Heart left ventricle (tissue), 16 donors: ENCODE measurements at regions of chr1 and their contacts with region 1.

Region 1: DNA sequence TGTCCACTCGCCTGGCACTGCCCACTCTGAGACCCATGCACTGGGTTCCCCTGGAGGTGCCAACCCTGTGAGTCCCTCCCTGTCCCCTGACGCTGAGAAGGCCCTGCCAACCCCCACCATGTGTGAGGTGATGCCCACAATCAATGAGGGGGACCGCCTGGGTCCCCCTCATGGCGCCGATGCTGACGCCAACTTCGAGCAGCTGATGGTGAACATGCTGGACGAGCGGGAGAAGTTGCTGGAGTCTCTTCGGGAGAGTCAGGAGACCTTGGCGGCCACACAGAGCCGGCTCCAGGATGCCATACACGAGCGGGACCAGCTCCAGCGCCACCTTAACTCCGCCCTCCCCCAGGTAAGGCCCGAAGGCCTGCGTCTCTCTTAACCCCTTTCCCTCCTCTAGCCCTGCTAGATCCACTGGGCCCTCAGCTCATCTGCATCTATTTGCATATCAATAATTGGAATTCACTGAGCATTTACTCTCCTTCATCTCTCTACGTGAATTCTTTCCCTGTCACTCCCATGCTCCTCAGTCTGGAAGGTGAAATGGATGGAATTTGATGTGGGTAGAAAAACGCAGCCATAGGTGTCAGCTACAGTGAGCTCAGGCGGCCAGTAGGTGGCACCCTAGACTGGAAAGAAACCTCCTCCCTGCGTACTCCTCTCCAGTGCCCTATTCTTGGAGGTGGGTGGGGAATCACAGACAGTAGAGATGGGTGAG is 12.8 kb downstream of the PPFIA4 start:
- DNase-seq: peak; percentile 75 to 82 (median 80)
- ATAC-seq: peak; percentile 70 to 82 (median 79)
- H3K4me3 ChIP-seq: no peak overlapping the region
- H3K27ac ChIP-seq: peak overlapping the region in 10 of 12 donors; percentile 63 to 90 (median 80)
- H3K4me1 ChIP-seq: peaks cover 0 to 73% (median 34%) of the 10 kb centered on the region in 12 donors
- H3K27me3 ChIP-seq: peaks cover 0 to 5% (median 0%) of the 10 kb centered on the region in 9 donors
- CTCF ChIP-seq: peak; percentile 86 to 96 (median 92)
- POLR2A ChIP-seq: no peak

Region 2: GRCh38 chr1:202733251-202733650 is 305.8 kb before region 1 on chr1:
- intact Hi-C with region 1: no loop called
- DNase-seq: no peak
- ATAC-seq: no peak
- H3K4me3 ChIP-seq: no peak overlapping the region
- H3K27ac ChIP-seq: no peak overlapping the region
- H3K4me1 ChIP-seq: no peaks in the 10 kb centered on the region
- H3K27me3 ChIP-seq: no peaks in the 10 kb centered on the region
- CTCF ChIP-seq: no peak
- POLR2A ChIP-seq: no peak

Region 3: GRCh38 chr1:203057911-203058675 is 19.0 kb after region 1 on chr1:
- intact Hi-C with region 1: no loop called
- DNase-seq: no peak
- ATAC-seq: peak in 1 of 4 donors; percentile 33
- H3K4me3 ChIP-seq: no peak overlapping the region
- H3K27ac ChIP-seq: no peak overlapping the region
- H3K4me1 ChIP-seq: peaks cover 0 to 33% (median 9%) of the 10 kb centered on the region in 12 donors
- H3K27me3 ChIP-seq: no peaks in the 10 kb centered on the region
- CTCF ChIP-seq: no peak
- POLR2A ChIP-seq: no peak

Region 4: DNA sequence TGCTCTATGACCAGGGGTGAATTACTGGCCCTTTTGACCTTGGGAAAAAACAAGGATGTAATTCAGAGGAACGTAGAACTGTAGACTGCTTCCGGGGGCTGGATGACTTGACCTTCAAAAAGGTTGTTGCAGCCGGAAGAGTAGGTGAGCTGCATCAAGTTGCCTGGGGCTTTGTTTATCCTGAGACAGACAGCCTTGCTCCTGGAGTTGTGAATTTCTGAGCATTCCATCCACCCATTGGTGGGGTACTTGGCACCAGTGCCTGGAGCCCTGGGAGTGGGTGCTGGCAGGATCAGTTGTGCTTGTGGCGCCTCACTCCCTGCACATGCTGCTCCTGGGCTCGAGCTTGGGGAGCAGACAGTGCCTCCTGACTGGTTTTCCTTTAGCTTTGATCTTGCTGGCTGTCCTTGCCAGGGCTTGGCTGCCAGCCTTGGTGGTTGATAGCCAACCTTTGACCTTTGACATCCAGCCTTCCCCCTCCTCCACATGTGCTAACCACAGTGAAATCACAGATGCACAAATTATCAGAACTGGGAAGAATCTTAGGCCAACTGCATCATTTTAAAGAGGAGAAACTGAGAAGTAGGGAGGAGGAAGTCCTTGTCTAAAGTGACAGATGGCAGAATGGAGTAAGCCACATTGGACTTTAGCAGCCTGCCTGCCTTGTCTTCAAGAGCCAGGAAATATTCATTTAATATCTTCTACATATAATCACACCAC is 63.0 kb after region 1 on chr1:
- intact Hi-C with region 1: no loop called
- DNase-seq: no peak
- ATAC-seq: no peak
- H3K4me3 ChIP-seq: no peak overlapping the region
- H3K27ac ChIP-seq: no peak overlapping the region
- H3K4me1 ChIP-seq: peaks cover 0 to 6% (median 0%) of the 10 kb centered on the region in 12 donors
- H3K27me3 ChIP-seq: peaks cover 0 to 10% (median 0%) of the 10 kb centered on the region in 9 donors
- CTCF ChIP-seq: no peak
- POLR2A ChIP-seq: no peak

Region 5: GRCh38 chr1:203112301-203112874 is 73.3 kb after region 1 on chr1:
- intact Hi-C with region 1: loop called in 2 of 10 experiments (anchors 5 kb)
- DNase-seq: no peak
- ATAC-seq: no peak
- H3K4me3 ChIP-seq: no peak overlapping the region
- H3K27ac ChIP-seq: no peak overlapping the region
- H3K4me1 ChIP-seq: no peaks in the 10 kb centered on the region
- H3K27me3 ChIP-seq: peaks cover 0 to 29% (median 0%) of the 10 kb centered on the region in 9 donors
- CTCF ChIP-seq: no peak
- POLR2A ChIP-seq: no peak

Region 6: GRCh38 chr1:203127666-203128430 is 88.8 kb after region 1 on chr1 and contains the start of gene ADORA1:
- intact Hi-C with region 1: loop called in 9 of 10 experiments (anchors 5 kb)
- DNase-seq: peak; percentile 67 to 85 (median 71)
- ATAC-seq: peak; percentile 73 to 88 (median 86)
- H3K4me3 ChIP-seq: peak within 1 kb of the TSS; percentile 22 to 54 (median 44)
- H3K27ac ChIP-seq: peak within 1 kb of the TSS; percentile 16 to 90 (median 83)
- H3K4me1 ChIP-seq: peaks cover 0 to 65% (median 40%) of the 10 kb centered on the region in 12 donors
- H3K27me3 ChIP-seq: peaks cover 0 to 55% (median 0%) of the 10 kb centered on the region in 9 donors
- CTCF ChIP-seq: peak in 3 of 12 donors; percentile 12 to 22 (median 16)
- POLR2A ChIP-seq: no peak
- total RNA-seq, gene ADORA1: 0.81 to 16.2 (median 9.5) TPM

Region 7: DNA sequence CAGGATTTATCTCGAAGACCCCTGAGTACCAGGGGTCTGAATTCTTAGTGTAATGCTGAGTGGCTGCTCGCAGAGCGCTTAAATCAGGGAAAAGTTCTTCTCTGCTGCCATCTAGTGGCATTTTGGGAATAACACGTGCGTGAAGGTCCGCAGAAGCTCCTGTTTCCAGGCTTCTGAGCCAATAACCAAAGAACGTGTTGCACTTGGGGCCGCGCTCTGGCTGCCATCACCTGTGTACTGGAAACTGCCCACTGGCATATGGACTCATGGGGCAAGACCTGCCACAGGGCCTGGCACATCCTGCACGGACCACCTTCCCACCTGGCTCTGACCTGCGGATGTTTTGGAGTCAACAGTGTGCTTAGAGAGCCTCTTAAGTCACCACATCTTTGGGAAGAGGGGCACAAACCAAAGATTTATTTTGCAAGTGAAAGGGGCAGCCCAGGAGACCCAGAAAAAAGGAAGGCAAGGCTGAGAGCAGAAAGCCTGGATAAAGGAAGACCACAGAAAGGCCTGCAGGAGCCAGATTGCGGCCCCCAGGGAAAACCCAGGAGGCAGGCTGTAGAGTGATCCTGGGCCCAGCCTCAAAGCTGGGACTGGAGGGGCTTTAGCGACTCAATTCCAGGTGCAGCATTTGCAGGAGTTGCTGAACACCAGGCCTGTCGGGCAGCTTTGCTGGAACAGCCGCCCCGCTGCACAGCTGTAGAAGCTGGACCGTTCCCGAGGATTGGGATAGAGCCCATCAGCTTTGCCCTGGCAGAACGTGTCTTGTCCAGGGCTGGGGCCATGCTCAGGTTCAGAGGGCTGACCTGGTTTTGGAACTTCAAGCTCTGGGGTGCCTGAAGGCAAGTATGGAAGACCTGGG is 177.5 kb after region 1 on chr1:
- intact Hi-C with region 1: loop called (anchors 1 to 2 kb)
- DNase-seq: peak in 3 of 5 donors; percentile 42 to 58 (median 49)
- ATAC-seq: peak; percentile 40 to 88 (median 64)
- H3K4me3 ChIP-seq: no peak overlapping the region
- H3K27ac ChIP-seq: no peak overlapping the region
- H3K4me1 ChIP-seq: peaks cover 0 to 4% (median 0%) of the 10 kb centered on the region in 12 donors
- H3K27me3 ChIP-seq: peaks cover 0 to 9% (median 0%) of the 10 kb centered on the region in 9 donors
- CTCF ChIP-seq: peak; percentile 69 to 88 (median 82)
- POLR2A ChIP-seq: no peak

Region 8: GRCh38 chr1:203273206-203273868 is 234.3 kb after region 1 on chr1:
- intact Hi-C with region 1: loop called in 4 of 10 experiments (anchors 1 to 5 kb)
- DNase-seq: peak; percentile 86 to 94 (median 88)
- ATAC-seq: peak; percentile 50 to 76 (median 62)
- H3K4me3 ChIP-seq: peak overlapping the region in 10 of 12 donors; percentile 29 to 54 (median 40)
- H3K27ac ChIP-seq: peak overlapping the region; percentile 8 to 98 (median 89)
- H3K4me1 ChIP-seq: peaks cover 7 to 81% (median 57%) of the 10 kb centered on the region in 12 donors
- H3K27me3 ChIP-seq: no peaks in the 10 kb centered on the region
- CTCF ChIP-seq: peak; percentile 95 to 100 (median 98)
- POLR2A ChIP-seq: peak in 1 of 2 donors; percentile 34